Heart left ventricle (tissue), 16 donors: ENCODE measurements at regions of chr11 and their contacts with region 1.

Region 1: DNA sequence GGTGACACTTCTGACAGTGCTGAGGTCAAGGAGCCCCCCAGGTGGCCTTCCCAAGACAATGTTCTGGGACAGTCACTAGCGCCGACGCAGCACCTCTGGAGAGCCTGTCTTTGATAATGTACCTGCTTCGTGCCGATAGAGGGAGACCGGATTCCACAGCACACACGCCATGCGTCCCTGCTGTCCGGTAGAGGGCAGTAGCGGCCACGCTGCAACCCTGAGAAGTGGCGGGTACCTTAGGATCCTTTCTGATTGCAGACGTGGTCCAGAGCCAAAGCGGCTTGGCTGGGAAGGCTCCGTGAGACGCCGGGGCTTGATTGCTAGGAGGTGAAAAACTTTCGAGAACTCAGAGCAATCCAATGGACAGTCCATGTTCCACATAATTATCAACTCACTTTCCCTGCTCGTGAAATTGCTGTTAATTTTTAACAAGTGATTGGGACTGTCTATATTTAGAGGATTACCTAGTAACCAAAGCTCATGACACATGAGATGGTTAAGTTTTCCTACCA is 11.4 kb upstream of the BARX2 start:
- DNase-seq: peak; percentile 65 to 86 (median 78)
- ATAC-seq: peak; percentile 93 to 98 (median 96)
- H3K4me3 ChIP-seq: peak overlapping the region in 1 of 12 donors; percentile 16
- H3K27ac ChIP-seq: no peak overlapping the region
- H3K4me1 ChIP-seq: peaks cover 0 to 6% (median 0%) of the 10 kb centered on the region in 12 donors
- H3K27me3 ChIP-seq: peaks cover 0 to 75% (median 18%) of the 10 kb centered on the region in 9 donors
- CTCF ChIP-seq: peak; percentile 85 to 98 (median 94)
- POLR2A ChIP-seq: no peak

Region 2: DNA sequence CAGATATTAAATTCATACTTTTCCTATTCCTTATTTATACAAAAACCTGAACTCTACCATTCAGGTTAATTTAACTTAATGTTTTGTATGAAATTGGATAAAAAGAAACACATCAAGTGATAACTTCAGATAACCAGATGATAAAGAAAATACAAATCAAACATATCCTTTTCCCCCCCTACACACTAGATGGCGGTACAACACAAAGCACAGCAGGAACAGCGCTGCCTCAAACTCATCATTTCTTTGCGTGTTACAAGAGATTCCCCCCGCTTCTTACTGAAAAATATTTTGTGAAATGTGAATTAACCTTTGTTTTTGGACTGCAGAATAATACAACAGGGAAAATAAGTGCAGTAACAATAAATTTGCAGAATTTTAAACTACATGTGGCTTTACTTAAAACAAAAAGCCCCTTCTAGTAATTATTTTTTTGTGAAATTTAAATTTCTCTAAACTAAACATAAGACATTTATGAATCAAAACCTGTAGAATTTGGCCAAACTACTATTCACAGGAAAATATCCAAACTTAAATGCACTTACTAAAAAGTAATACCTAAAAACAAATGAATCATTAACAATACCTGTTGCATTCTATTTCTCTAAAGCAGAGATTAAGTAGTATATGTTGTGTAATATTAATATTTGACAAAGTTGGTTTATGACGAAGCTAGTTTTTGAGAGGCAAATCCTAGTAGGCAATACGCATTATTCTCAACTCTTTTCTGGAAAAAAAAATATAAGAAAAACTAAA is 246.4 kb before region 1 on chr11:
- intact Hi-C with region 1: no loop called
- DNase-seq: peak in 1 of 5 donors; percentile 27
- ATAC-seq: peak in 2 of 4 donors; percentile 59 to 61
- H3K4me3 ChIP-seq: no peak overlapping the region
- H3K27ac ChIP-seq: no peak overlapping the region
- H3K4me1 ChIP-seq: peaks cover 0 to 3% (median 0%) of the 10 kb centered on the region in 12 donors
- H3K27me3 ChIP-seq: no peaks in the 10 kb centered on the region
- CTCF ChIP-seq: peak; percentile 79 to 94 (median 86)
- POLR2A ChIP-seq: no peak

Region 3: GRCh38 chr11:129695575-129696308 is 331.5 kb after region 1 on chr11:
- intact Hi-C with region 1: loop called in 1 of 10 experiments (anchors 10 kb)
- DNase-seq: peak in 4 of 5 donors; percentile 23 to 65 (median 38)
- ATAC-seq: peak; percentile 67 to 82 (median 73)
- H3K4me3 ChIP-seq: peak overlapping the region in 10 of 12 donors; percentile 8 to 46 (median 38)
- H3K27ac ChIP-seq: no peak overlapping the region
- H3K4me1 ChIP-seq: peaks cover 0 to 5% (median 0%) of the 10 kb centered on the region in 12 donors
- H3K27me3 ChIP-seq: peaks cover 0 to 45% (median 2%) of the 10 kb centered on the region in 9 donors
- CTCF ChIP-seq: peak; percentile 37 to 66 (median 54)
- POLR2A ChIP-seq: no peak